Dendritic cell treated with granulocyte-macrophage colony-stimulating factor and Interleukin-4, amounts not matched to agents 40 ng/mL and 50 ng/mL, for 4 days (primary cell): ENCODE measurements at regions of chr17 and their contacts with region 1.

Region 1: DNA sequence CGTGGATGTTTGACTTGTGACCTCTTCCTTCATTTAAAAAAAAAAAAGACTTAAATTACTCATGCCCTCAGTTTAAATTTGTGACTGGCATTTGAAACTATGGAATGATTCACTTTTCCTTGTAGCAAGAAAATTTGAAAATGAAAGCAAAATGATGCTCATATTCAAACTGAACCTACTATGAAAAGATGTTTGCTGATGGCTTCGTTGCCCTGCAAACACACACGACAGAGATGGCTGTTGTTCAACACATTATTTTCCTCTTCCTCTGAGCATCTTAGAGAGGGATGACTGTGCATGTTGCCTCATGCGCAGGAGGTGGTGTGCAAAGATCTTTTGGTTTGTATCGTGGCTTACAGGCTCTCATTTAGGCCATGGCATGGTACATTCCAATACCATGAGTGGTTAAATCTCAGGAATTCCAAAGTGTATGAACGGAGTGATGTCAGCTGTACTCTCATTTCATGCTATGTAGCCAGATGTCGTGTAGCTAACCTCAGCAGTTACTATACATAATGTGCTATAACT is 164.5 kb downstream of the PRKCA start:
- H3K4me3 Mint-ChIP-seq: no peak overlapping the region
- H3K27ac Mint-ChIP-seq: no peak overlapping the region
- H3K4me1 Mint-ChIP-seq: peaks cover 68% of the 10 kb centered on the region
- H3K27me3 Mint-ChIP-seq: no peaks in the 10 kb centered on the region

Region 2: DNA sequence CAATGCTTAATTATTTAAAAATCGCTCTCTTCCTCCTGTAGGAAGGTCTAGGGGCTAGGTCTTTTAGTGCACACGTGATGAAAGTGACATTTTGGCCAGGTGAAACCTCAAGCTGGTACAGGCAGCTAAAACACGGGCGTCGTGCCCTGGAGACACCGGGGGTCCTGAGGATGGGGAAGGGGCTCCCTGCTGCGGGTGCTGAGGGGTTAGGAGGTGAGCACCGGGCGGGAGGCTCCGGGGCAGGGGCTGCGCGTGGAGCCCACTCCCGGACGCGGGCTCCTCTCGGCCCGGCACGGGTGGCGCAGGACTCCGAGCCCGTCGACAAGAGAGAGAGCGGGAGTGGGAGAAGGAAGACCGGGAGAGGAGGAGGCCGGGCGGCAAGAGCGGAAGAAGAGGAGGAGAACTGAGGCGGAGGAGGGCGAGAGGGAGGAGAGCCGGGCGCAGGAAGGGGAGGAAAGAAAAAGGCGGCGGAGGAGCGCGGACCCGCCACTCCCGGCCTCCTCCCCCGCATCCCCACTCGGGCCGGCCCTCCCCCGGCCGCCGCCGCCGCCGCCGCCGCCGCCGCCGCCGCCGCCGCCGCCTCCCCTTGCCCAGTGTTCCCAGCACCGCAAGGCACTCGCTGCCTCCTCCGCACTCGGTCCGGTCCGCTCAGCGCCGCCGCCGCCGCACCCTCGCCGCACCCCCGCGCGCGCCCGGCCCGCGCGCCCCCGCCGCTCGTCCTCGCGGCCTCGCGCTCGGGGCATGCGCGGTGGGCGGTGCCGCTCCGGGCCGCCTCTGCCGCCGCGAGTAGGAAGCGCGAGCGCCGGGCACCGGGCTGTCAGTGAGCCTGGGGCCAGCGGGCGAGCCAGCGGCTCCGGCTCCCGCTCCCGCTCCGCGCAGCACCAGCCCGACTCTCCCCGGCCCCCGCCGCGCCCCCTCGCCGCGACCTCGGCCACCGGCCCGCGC is 164.8 kb before region 1 on chr17 and contains the start of gene PRKCA:
- intact Hi-C with region 1: loop called (anchors 2 kb)
- H3K4me3 Mint-ChIP-seq: peak within 1 kb of the TSS; percentile 95
- H3K27ac Mint-ChIP-seq: peak within 1 kb of the TSS; percentile 79
- H3K4me1 Mint-ChIP-seq: peaks cover 38% of the 10 kb centered on the region
- H3K27me3 Mint-ChIP-seq: peaks cover 36% of the 10 kb centered on the region

Region 3: DNA sequence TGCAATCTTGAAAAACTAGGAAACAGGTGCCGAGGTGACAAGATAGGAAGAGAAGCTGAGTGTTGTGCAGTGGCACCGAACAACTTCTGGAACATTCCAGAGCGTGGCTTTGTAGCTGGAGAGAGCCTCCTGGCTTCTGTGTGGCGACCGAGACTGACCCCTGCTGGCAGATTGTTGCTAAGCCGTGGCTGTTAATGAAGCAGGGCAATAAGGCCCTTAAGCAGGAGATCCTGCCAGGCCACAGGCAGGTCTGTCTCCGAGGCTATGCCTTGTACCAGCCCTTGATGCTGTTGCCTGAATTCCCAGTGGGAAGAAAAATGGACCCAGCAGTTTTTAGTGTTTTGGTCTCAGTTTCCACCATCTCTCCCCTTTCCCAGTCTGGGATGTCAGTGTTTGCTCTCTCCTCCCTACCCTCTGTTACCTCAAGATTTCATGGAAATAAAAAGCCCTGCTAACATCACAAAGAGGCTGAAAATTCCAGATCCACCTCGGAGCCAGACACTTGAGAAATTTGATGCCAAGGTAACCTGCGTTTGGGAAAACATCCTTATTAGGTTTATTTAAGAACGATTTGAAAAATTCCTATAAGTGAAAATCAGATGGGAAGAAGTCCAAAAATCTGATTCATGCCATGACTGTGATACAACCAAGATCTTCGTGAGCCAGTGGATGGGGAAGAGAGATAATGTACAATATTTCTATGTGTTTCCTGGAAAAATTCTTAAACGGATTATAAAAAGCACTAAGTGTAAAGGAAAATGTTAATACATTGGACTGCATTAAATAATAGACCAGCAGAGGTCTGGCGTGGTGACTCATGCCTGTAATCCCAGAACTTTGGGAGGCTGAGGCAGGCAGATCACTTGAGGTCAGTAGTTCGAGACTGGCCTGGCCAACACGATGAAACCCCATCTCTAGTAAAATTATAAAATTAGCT is 100.6 kb after region 1 on chr17:
- intact Hi-C with region 1: no loop called
- H3K4me3 Mint-ChIP-seq: no peak overlapping the region
- H3K27ac Mint-ChIP-seq: no peak overlapping the region
- H3K4me1 Mint-ChIP-seq: peaks cover 20% of the 10 kb centered on the region
- H3K27me3 Mint-ChIP-seq: peaks cover 2% of the 10 kb centered on the region